A673 (cell line): ENCODE measurements at regions of chr2 and their contacts with region 1.

Region 1: DNA sequence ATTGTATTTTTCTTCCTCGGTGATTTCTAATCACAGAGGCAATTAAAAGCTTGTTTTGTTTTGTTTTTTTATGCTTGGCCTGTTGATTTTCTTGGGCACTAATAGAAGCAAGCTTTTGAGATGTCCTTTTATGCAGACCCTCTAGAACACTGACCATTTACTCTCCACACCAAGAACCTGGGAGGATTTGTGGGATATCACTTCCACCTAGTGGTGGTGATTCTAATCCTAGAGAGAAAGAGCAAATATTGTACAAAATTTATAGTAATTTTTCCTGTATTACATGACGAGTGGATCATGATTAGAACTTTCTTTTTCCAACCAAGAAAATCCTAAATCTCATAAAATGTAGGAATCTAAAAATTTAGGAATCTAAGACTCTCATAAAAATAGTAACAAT is 23.4 kb downstream of the NEMP2 start:
- DNase-seq: peak; percentile 36
- H3K4me3 ChIP-seq: no peak overlapping the region
- H3K27ac ChIP-seq: no peak overlapping the region
- H3K4me1 ChIP-seq: no peaks in the 10 kb centered on the region
- H3K27me3 ChIP-seq: no peaks in the 10 kb centered on the region
- CTCF ChIP-seq: peak; percentile 55; the same call in 1 of the 2 replicates

Region 2: DNA sequence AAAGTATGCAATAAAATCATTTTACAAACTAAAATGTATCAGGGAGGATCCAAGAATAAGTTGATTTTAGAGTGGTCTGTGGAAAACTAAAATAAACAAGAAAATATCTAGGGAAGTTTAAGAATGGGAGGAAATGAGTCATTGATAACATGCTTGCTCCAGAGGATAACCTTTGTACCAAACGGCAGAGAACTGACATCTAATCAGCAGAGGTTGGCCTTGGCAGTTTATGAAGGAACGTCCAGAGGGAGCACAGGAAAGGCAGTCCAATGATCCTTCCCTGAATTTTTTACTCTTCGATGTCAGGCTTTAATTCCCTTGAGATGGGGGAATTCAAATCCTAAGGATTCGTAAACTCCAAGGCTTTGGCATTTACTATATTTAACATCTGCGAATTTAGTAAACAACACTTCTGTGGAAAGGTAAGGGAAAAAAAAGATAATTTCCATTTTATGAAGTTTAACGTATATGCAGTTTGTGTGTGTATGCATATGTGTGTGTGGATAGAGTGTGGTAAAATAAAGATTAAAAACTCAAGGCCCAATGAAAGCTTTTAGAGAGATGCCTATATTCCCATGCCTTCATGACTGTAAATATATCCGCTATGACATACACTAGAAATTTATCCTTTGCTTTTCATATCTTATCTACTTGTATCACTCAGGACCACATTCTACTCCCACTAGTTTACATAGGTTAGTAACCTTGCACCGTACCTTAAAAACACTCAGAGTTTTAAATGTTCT is 176.5 kb before region 1 on chr2:
- CTCF ChIA-PET with region 1: no interaction called
- POLR2A ChIA-PET with region 1: no interaction called
- intact Hi-C with region 1: loop called (anchors 10 kb)
- DNase-seq: no peak
- H3K4me3 ChIP-seq: no peak overlapping the region
- H3K27ac ChIP-seq: no peak overlapping the region
- H3K4me1 ChIP-seq: no peaks in the 10 kb centered on the region
- H3K27me3 ChIP-seq: no peaks in the 10 kb centered on the region
- CTCF ChIP-seq: no peak